ENCODE measurements at regions of chr14 and their contacts with region 1.

Region 1: GRCh38 chr14:75995372-75996041 is 9.9 kb downstream of the IFT43 start:
- DNase-seq: no peak
- ATAC-seq: peak; percentile 86

Region 2: DNA sequence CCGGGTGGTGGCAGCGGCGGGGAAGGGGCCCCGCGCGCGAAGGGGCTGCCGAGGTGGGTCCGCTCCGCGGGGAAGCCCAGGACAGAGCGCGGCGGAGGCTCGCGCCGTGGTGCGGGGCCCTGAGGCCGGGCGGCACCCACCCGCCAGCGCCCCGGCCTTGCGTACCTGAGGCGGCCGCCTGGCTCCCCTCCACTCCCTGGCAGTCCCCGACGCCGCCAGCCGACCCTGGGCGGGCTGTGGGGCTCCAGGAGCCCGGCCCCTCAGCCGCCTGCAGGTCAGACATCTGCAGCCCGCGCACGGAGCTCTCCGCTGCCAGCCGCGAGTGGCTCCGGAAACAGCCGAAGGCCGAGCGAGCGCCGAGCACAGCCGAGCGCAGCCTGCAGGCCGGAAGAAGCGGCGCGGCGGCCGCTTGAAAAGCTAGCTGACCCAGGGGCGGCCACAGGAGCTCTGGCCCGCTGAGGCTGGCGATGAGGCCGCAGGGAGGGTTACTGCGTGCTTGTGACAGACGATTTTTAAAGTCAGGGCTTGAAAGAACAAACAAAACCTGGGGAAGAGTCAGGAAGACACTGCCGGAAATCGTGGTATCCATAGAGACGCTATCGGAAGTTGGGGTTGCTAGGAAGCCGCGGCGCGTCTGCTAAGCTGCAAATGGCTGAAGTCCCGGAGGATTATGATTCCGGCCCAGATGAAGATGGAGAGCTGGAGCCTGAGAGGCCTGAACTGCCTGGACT is 1381.4 kb after region 1 on chr14 and contains the starts of genes SAMD15 and TMED8:
- intact Hi-C with region 1: loop called (anchors 10 kb)
- DNase-seq: peak; percentile 93
- ATAC-seq: peak; percentile 98
- total RNA-seq, gene SAMD15: 0.08 TPM
- total RNA-seq, gene TMED8: 5.1 TPM